Activated CD8-positive, alpha-beta memory T cell treated with anti-CD3 and anti-CD28 coated beads, Interleukin-2, amount 10 ng/mL, durations not matched to agents 7 days and 5 days (primary cell): ENCODE measurements at regions of chr2 and their contacts with region 1.

Region 1: GRCh38 chr2:26184555-26185303 is 11.8 kb downstream of the GAREM2 start:
- DNase-seq: peak; percentile 89
- ATAC-seq: peak; percentile 99
- H3K4me3 Mint-ChIP-seq: peak overlapping the region; percentile 69
- H3K27ac Mint-ChIP-seq: peak overlapping the region; percentile 31
- H3K4me1 Mint-ChIP-seq: peaks cover 19% of the 10 kb centered on the region
- H3K27me3 Mint-ChIP-seq: peaks cover 17% of the 10 kb centered on the region

Region 2: GRCh38 chr2:25606892-25607291 is 577.8 kb before region 1 on chr2:
- CTCF ChIA-PET with region 1: interaction called, 10 read pairs
- DNase-seq: no peak
- ATAC-seq: no peak
- H3K4me3 Mint-ChIP-seq: no peak overlapping the region
- H3K27ac Mint-ChIP-seq: no peak overlapping the region
- H3K4me1 Mint-ChIP-seq: peaks cover 20% of the 10 kb centered on the region
- H3K27me3 Mint-ChIP-seq: no peaks in the 10 kb centered on the region

Region 3: GRCh38 chr2:25991965-25992364 is 192.8 kb before region 1 on chr2:
- CTCF ChIA-PET with region 1: interaction called, 12 read pairs
- DNase-seq: no peak
- ATAC-seq: no peak
- H3K4me3 Mint-ChIP-seq: no peak overlapping the region
- H3K27ac Mint-ChIP-seq: no peak overlapping the region
- H3K4me1 Mint-ChIP-seq: peaks cover 27% of the 10 kb centered on the region
- H3K27me3 Mint-ChIP-seq: peaks cover 7% of the 10 kb centered on the region

Region 4: DNA sequence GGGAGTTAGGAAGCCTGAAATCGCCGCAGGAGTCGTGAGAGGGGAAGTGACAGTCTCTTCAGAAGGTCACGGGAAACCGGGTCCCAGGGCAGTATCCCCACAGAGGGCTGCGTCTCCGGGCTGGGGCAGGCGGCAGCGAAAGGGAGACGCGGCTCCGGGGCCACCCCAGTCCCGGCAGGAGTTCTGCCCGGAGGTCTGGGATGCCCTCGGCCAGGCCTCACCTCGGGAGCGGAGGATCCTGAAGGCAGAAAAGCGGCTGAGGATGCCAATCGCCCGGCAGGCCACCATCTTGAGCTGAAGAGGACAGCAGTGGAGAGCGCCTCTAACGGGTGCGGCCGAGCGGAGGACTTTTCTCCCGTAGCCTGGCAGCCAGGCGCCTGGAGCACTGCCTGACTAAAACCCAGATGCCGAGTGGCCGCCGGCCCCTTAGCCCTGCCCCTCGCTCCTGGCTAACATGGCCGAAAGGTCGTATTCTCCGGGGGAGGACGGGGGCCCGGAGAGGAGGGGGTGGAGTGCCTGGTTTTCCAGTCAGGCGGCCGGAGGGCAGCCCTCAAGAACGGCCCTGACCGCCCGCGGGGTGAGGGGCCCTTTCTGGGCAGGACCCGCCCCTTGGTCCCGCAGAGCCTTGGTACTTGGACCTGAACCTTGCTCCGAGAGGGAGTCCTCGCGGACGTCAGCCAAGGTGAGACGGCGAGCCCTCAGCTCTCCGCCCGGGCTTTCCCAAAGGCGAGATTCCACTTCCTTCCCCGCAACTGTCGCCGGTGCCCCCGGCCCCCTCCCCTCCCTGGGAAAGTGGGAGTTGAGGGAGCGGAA is 59.8 kb after region 1 on chr2 and contains the starts of genes HADHA and HADHB:
- CTCF ChIA-PET with region 1: interaction called, 17 read pairs
- DNase-seq: peak; percentile 89
- ATAC-seq: peak; percentile 83
- H3K4me3 Mint-ChIP-seq: peak within 1 kb of the TSS; percentile 96
- H3K27ac Mint-ChIP-seq: peak within 1 kb of the TSS; percentile 99
- H3K4me1 Mint-ChIP-seq: peaks cover 47% of the 10 kb centered on the region
- H3K27me3 Mint-ChIP-seq: no peaks in the 10 kb centered on the region
- total RNA-seq, gene HADHA: 117 to 145 TPM
- total RNA-seq, gene HADHB: 55.8 to 83.5 TPM

Region 5: GRCh38 chr2:26345545-26346453 is 161.1 kb after region 1 on chr2 and contains the start of gene SELENOI:
- CTCF ChIA-PET with region 1: interaction called, 12 read pairs
- DNase-seq: peak; percentile 99
- ATAC-seq: peak; percentile 95
- H3K4me3 Mint-ChIP-seq: peak within 1 kb of the TSS; percentile 91
- H3K27ac Mint-ChIP-seq: peak within 1 kb of the TSS; percentile 96
- H3K4me1 Mint-ChIP-seq: peaks cover 44% of the 10 kb centered on the region
- H3K27me3 Mint-ChIP-seq: no peaks in the 10 kb centered on the region
- total RNA-seq, gene SELENOI: 38.4 to 41.3 TPM